GM23248 (cell line): ENCODE measurements at regions of chr12 and their contacts with region 1.

Region 1: DNA sequence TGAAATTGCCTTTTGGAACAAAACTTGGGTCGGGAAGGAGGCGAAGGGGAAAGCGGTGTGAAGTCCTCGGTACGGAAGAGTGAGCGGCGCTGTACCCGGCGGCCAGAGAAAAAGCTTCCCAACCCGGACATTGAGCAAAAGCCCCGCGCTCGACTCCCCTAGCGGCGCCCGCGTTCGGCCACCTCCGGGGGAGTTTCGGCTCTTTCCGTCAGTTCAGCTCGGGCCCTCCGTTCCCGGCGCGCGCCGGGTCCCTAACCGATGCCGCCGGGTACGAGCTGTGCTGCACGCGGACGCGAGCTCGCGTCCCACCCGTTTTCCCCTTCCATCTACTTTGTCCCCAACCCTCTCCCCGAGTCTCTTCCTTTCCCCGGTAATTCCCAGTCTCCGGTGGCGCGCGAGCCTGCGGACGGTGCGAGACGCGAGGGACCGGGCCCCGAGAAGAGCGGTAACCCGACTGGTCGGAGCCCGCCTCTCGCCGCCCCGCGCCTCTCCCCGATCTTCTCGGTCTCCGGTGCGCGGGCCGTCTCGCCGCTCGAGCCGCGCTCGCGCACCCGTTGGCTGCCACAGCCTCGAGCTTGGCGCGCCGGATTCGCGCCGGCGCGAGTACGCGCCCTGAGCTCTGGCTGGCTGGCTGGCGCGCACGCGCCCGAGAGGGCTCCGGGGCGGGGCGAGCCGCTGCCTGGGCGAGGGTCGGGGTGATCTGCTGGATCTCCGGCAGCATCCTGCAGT is 446 bp upstream of the SPATS2 start:
- DNase-seq: peak; percentile 94
- H3K4me3 ChIP-seq: peak overlapping the region; percentile 82
- H3K27ac ChIP-seq: peak overlapping the region; percentile 83
- H3K4me1 ChIP-seq: peaks cover 27% of the 10 kb centered on the region
- H3K27me3 ChIP-seq: no peaks in the 10 kb centered on the region

Region 2: DNA sequence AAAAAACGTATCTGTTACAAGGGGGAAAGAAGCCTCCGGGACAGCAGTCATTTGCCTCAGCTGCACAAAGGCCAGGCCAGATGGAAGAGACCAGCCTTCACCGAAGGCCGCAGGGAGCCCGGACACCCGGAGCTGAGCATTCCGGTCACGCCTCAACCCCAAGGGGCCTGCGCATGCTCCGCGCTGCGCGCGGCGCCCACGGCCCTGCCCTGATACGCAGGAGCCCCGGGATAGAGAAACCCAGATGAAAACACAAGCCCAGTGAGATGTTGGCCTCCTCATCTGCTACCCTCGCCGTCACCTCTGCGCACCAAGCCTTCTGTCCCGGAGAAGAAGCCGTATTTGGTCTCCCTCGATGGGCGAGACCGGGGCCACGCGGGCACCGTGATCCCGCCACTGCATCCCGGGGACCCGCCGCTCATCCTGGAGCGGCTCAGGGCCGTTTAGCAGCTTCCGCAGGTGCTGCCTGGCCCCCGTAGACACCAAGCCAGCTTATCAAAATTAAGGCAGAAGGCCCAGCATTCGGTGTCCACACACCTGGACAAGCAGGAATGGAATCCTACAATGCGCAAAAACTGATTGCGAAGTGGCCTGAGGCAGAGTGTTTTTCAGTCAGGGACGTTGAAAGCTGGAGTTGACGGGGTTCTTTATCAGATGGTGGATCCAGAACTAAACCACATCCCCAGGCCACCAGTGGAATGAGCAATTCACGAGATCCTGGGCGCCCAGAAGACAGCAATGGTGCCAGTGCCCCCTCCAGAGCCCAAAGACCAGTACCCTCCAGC is 838.7 kb before region 1 on chr12:
- in situ Hi-C with region 1: no loop called
- DNase-seq: no peak
- H3K4me3 ChIP-seq: no peak overlapping the region
- H3K27ac ChIP-seq: no peak overlapping the region
- H3K4me1 ChIP-seq: no peaks in the 10 kb centered on the region
- H3K27me3 ChIP-seq: no peaks in the 10 kb centered on the region

Region 3: DNA sequence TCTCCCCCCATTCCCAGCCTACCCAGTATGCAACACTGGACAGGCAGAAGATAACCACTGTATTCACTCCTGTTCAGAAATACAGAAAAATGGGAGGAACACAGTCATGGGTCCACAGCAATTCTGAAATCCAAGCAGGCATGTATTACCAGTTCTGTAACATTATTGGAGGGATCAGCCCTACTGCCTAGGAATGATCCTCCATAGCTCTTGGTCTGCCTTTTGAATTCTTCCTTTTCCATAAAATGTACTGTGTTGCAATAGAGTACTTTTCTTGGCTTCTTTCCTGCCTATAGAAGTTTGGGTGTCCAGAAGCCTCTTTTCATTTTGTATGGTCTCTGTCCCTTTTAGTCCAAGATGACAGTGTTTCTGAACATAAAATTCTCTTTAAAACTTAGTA is 47.0 kb after region 1 on chr12:
- in situ Hi-C with region 1: no loop called
- DNase-seq: peak; percentile 10
- H3K4me3 ChIP-seq: no peak overlapping the region
- H3K27ac ChIP-seq: no peak overlapping the region
- H3K4me1 ChIP-seq: 0 out of 2 replicates have a peak, but pooled peaks cover 3% of the 10 kb centered on the region
- H3K27me3 ChIP-seq: no peaks in the 10 kb centered on the region

Region 4: DNA sequence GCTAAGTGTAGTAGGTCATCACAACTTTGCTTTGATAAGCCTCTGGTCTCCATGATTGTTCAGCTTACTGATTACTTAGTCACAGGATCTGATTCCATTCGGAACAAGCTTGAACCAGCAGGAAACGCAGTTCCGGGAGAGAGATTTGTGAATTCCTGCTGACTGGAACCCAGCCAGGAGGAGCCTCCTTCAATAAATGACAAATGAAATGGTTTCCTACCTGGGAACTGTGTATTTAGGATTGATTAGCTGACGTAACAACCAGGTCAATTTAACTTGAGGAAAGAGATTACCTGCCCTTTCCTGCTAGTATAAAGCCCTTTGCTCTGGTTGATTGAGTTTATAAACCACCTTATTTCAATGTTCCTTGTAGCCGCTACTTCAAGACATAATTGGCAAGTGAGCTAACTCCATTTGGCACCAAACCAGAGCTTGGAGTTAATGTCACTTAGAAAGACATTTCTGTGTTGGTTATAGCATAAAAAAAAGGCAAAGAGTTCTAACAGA is 136.9 kb after region 1 on chr12:
- in situ Hi-C with region 1: loop called (anchors 10 kb)
- DNase-seq: no peak
- H3K4me3 ChIP-seq: no peak overlapping the region
- H3K27ac ChIP-seq: no peak overlapping the region
- H3K4me1 ChIP-seq: peaks cover 15% of the 10 kb centered on the region
- H3K27me3 ChIP-seq: no peaks in the 10 kb centered on the region